ENCODE measurements at regions of chr3 and their contacts with region 1.

Region 1: DNA sequence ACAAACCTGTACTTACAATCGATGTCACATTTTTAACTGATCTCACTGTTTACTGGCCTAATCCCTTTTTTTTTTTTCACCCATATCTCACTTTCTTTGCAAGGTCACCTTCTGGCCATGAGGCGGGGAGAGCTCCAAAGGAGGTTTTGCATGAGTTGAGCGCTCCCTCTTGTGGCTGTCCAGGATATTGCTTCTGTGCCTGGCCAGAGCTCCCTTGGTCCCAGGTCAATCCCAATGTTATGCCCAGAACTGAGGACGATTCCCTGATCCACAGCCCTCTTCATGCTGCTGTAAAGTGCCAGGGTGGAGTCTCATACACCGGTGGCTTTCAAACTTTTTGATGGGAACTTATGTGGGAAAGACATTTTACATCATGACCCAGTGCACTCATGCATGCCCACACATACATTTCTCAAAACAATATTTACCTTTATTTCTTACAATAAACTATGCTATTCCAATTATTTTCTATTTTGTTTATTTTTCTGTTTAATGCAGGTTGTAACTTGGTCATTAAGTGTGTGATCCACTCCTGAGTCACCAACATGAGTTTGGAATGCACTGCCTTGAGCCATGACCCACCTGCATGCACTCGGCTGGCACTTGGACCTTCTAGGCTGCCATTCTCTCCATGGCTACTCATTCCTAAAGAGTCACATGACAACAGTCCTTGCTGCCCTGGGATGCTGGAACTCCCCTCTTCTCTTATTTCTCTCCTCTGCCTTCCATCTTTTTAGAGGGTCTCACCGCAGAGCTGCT is 9.6 kb upstream of the SST start:
- DNase-seq: peak; percentile 67
- CTCF ChIP-seq: peak; percentile 96

Region 2: DNA sequence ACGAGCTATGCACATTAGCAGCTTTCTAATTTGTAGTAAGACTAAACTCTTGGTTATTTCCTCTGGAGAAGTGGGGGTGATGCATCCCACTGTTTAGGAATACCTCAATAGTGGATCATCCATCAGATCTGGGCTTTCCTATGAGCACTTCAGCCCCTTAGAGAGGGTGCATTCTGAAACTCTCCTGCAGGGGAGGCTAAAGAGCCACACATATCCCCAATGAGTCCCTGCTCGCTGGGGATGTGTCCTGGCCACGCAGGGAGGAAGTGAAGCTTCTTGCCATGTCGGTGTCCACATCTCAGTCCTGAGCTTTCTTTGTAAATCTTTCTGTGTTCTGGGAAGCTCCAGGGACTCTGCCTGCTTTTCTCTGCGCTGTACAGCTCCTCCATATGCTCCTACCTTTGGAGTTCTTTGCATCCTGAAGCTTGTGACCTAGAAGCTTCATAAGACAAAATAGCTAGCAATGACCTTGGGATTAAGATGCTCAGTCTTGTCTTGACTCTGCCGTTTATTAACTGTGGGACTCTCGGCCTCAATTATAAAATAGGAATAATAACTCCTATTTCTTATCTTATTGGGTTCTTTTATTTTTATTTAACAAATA is 360.0 kb before region 1 on chr3:
- in situ Hi-C with region 1: loop called (anchors 5 kb)
- DNase-seq: peak; percentile 57
- CTCF ChIP-seq: peak; percentile 65

Region 3: DNA sequence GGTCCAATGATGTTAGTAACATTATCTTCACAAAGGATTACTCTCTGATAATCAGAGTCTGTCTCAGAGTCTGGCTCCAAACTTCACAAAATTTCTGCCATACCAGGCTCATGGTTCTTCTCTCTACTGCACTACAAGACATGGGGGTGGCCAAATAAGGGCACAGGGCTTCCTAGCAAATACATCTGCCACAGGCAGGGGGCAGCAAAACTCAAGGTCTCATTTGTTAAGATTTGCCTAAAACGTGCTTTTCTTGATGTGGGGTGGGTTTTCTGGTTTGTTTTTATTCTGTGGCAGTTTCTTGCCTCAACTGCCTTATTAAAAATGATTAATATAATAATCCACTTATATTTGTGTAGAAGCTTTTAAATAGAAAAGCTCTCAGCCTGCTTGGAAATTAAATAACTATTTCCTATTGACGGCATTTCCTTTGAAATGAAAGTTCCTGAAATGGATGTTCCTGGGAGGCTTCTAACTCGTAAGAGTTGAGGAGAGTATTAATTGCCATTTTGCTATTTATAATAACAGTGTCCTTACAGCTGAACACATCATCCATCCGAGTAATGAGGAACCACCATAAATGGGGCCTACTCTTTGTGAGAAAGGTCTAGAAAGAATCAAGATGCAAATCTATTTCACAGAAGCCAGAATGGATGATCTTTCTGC is 63.4 kb before region 1 on chr3:
- in situ Hi-C with region 1: loop called (anchors 5 kb)
- DNase-seq: peak; percentile 37
- CTCF ChIP-seq: peak; percentile 58

Region 4: DNA sequence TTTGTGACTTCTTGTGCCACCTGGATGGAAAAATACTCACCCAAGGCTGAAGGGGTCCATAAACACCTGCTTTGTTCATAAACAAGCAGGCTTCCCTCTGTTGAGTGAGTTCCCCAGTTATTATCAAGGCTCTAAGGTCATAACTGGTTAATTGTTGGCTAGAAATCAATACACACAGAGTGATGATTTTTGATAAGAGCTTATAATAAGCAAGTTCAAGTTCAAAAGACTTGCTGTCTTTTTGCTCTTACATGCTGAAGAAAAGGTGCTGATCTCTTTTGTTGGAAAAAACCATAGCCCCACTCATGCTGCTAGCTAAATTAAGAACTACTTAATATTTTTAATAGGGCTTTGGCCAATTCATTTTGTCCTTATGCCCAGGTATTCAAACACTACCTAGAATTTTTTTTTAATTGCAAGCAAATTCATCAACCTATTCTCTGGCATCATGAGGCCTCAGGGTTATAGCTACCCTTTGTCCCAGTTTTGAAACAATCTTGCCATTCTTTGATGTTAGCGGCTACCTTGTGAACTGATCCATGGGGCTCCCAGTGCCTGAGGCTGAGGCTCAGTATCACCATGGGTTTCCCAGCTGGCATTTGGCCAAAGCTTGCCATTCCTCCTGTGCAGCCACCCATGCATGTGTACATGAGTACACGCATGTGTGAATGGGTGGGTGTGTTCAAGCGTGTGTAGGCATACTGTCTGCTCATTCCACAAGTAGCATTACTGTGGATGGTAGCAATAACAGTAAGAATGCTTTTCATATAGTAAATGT is 346.6 kb after region 1 on chr3:
- in situ Hi-C with region 1: no loop called
- DNase-seq: no peak
- CTCF ChIP-seq: no peak

Region 5: GRCh38 chr3:188348435-188349244 is 668.8 kb after region 1 on chr3:
- in situ Hi-C with region 1: no loop called
- DNase-seq: no peak
- CTCF ChIP-seq: no peak

Measured in GM13976 (cell line).